CD4-positive, alpha-beta T cell (primary cell): ENCODE measurements at regions of chr7 and their contacts with region 1.

Region 1: DNA sequence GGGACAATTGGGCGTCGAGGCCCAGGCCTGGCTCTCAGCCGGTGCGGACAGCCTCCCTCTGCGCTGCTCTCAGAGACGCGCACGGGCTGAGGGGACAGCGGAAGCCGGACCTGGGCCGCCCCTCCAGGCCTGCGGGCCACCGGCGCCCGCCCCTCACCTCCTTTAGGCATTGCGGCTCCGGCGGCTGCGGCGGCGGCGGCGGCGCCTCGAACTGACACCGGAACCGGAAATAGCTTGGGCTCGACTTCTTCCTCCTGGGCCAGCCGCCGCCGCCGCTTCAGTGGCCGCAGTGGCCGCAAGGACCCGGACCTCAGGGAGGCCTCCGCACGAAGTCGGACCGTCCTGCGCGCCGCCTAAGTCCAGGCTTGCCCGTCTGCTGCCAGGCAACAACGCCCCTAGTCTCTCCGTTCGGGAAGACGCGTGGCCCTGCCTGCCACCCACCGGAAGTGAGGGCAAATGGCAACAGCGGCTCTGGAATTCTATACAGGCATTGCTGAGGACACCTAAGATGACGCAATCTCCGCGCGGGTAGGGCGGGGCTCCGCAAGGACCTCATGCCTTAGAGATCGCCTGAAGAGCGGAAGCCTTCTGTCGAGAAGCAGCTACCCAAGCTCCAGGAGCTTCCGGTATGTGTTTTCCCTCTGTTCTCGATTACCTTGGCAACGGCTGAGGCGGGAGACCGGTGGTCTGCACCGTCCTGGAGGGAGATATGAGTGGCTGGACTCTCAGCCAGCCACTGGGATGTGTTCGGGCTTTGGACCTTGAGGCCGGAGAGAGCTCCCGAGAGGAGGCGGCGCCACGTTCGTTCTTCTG is at the starts of genes BUD31 and PDAP1:
- DNase-seq: peak; percentile 90 to 98 (median 94)
- ATAC-seq: peak; percentile 86
- H3K4me3 ChIP-seq: peak within 1 kb of the TSS; percentile 99
- H3K4me3 Mint-ChIP-seq: peak within 1 kb of the TSS; percentile 93
- H3K27ac ChIP-seq: peak within 1 kb of the TSS; percentile 98 to 99
- H3K27ac Mint-ChIP-seq: peak within 1 kb of the TSS; percentile 87
- H3K4me1 ChIP-seq: peaks cover 55% of the 10 kb centered on the region
- H3K4me1 Mint-ChIP-seq: peaks cover 58% of the 10 kb centered on the region
- H3K27me3 ChIP-seq: no peaks in the 10 kb centered on the region
- H3K27me3 Mint-ChIP-seq: no peaks in the 10 kb centered on the region
- CTCF ChIP-seq: no peak
- total RNA-seq, gene BUD31: 147 to 153 TPM
- total RNA-seq, gene PDAP1: 35.0 to 38.0 TPM

Region 2: DNA sequence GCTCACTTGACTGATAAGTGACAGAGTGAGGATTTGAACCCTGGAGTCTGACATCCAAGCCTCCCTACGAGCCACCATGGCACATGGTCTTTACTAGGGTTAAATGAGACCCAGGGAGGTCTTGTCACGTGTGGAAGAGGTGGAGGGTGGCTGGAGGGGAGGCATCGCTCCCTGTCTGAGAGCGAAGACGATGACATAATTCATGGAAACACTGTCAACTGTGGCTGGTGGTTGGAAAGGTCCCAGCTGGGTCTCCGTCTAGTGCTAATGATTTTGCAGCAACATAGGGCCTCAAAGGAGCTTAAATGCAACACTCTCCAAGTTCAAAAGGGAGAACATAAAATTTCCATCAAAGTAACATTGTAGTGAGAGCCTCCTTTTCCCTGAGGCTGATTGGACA is 907.8 kb before region 1 on chr7:
- CTCF ChIA-PET with region 1: no interaction called
- POLR2A ChIA-PET with region 1: no interaction called
- intact Hi-C with region 1: no loop called
- DNase-seq: no peak
- ATAC-seq: no peak
- H3K4me3 ChIP-seq: no peak overlapping the region
- H3K4me3 Mint-ChIP-seq: no peak overlapping the region
- H3K27ac ChIP-seq: no peak overlapping the region
- H3K27ac Mint-ChIP-seq: no peak overlapping the region
- H3K4me1 ChIP-seq: no peaks in the 10 kb centered on the region
- H3K4me1 Mint-ChIP-seq: no peaks in the 10 kb centered on the region
- H3K27me3 ChIP-seq: peaks cover 0 to 2% of the 10 kb centered on the region in 2 experiments
- H3K27me3 Mint-ChIP-seq: peaks cover 8% of the 10 kb centered on the region
- CTCF ChIP-seq: no peak

Region 3: DNA sequence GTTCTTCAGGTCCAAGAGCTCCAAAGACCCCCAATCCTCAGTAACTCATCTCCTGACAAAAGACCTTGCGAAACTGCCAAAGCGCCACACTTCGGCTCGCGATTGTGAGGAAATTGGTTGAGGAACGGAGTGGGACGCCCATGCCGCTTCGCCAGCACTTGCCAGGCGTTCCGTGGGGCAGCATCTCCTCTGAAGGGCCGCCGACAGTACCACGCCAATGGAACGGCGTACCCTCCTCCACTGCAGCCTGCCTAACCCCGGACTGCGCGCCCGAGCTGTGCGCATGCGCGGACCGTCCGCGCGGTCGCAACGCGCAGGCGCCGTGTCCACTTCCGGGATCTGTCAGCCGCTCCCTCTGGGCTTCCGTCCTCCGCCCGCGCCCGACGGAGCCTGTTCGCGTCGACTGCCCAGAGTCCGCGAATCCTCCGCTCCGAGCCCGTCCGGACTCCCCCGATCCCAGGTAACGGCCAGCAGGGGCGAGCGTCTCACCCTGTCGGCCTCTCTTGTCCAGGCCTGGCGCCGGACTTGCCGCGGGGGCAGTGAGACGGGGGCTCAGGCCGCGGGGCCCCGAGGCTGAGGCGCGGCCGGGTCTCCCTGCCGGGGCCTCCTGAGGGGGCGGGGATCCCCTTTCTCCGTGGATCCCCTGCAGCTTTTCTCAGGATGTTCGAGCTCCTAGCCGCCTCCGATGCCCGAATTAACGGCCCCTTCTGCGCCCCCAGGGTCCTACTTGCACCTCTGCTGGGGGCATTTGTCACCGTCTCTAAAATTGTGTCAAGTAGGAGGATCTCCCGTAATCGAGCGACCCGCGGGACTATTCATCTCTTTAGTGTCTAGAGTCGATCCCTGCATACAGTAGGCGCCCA is 82.8 kb before region 1 on chr7 and contains the start of gene ARPC1A:
- CTCF ChIA-PET with region 1: no interaction called
- POLR2A ChIA-PET with region 1: interaction called, 10 read pairs
- intact Hi-C with region 1: loop called in 1 of 2 experiments (anchors 10 kb)
- DNase-seq: peak; percentile 83 to 97 (median 91)
- ATAC-seq: peak; percentile 94
- H3K4me3 ChIP-seq: peak within 1 kb of the TSS; percentile 90
- H3K4me3 Mint-ChIP-seq: peak within 1 kb of the TSS; percentile 94
- H3K27ac ChIP-seq: peak within 1 kb of the TSS; percentile 28 to 69
- H3K27ac Mint-ChIP-seq: peak within 1 kb of the TSS; percentile 85
- H3K4me1 ChIP-seq: peaks cover 42% of the 10 kb centered on the region
- H3K4me1 Mint-ChIP-seq: peaks cover 42% of the 10 kb centered on the region
- H3K27me3 ChIP-seq: no peaks in the 10 kb centered on the region
- H3K27me3 Mint-ChIP-seq: no peaks in the 10 kb centered on the region
- CTCF ChIP-seq: no peak
- total RNA-seq, gene ARPC1A: 25.3 to 30.4 TPM

Region 4: GRCh38 chr7:99374103-99375064 is 34.2 kb before region 1 on chr7 and contains the start of gene ARPC1B:
- CTCF ChIA-PET with region 1: interaction called, 7 read pairs
- POLR2A ChIA-PET with region 1: interaction called, 39 read pairs
- intact Hi-C with region 1: loop called in 1 of 2 experiments (anchors 1 kb)
- DNase-seq: peak; percentile 63 to 95 (median 82)
- ATAC-seq: peak; percentile 51
- H3K4me3 ChIP-seq: peak within 1 kb of the TSS; percentile 74
- H3K4me3 Mint-ChIP-seq: peak within 1 kb of the TSS; percentile 93
- H3K27ac ChIP-seq: peak within 1 kb of the TSS; percentile 89 to 94
- H3K27ac Mint-ChIP-seq: peak within 1 kb of the TSS; percentile 95
- H3K4me1 ChIP-seq: peaks cover 47% of the 10 kb centered on the region
- H3K4me1 Mint-ChIP-seq: peaks cover 27% of the 10 kb centered on the region
- H3K27me3 ChIP-seq: no peaks in the 10 kb centered on the region
- H3K27me3 Mint-ChIP-seq: no peaks in the 10 kb centered on the region
- CTCF ChIP-seq: no peak
- total RNA-seq, gene ARPC1B: 58.8 to 66.6 TPM

Region 5: DNA sequence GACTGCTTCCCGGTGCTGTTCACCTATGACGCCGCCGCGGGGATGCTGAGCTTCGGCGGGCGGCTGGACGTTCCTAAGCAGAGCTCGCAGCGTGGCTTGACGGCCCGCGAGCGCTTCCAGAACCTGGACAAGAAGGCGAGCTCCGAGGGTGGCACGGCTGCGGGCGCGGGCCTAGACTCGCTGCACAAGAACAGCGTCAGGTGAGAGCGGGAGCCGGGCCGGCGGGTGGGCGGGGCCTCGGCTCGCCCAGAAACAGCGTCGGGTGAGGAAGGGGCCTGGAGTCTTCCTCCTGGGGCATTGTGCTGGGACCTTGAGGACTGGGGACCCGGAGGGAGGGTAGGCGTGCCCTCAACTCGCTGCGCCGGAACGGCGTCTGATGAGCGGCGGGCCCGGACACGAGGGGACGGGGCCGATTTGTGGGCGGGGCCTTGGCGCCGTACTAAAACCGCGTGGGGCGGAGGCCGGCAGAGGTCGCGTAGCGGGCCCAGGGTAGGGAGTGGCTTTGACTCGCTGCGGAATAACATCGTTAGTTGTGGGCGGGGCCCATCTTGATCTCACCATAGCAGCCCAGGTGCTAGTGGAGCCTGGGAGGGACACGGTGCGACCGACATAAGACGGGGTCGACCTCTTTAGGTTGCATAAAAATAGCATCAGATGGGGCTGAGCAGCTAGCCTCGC is 15.8 kb before region 1 on chr7:
- CTCF ChIA-PET with region 1: no interaction called
- POLR2A ChIA-PET with region 1: interaction called, 105 read pairs
- intact Hi-C with region 1: loop called (anchors 1 to 2 kb)
- DNase-seq: peak; percentile 67 to 93 (median 81)
- ATAC-seq: peak; percentile 95
- H3K4me3 ChIP-seq: peak overlapping the region; percentile 56
- H3K4me3 Mint-ChIP-seq: peak overlapping the region; percentile 76
- H3K27ac ChIP-seq: peak overlapping the region; percentile 63 to 72
- H3K27ac Mint-ChIP-seq: peak overlapping the region; percentile 94
- H3K4me1 ChIP-seq: peaks cover 28% of the 10 kb centered on the region
- H3K4me1 Mint-ChIP-seq: peaks cover 18% of the 10 kb centered on the region
- H3K27me3 ChIP-seq: no peaks in the 10 kb centered on the region
- H3K27me3 Mint-ChIP-seq: no peaks in the 10 kb centered on the region
- CTCF ChIP-seq: no peak

Region 6: GRCh38 chr7:99465421-99465768 is 56.8 kb after region 1 on chr7:
- CTCF ChIA-PET with region 1: no interaction called
- POLR2A ChIA-PET with region 1: interaction called, 15 read pairs
- intact Hi-C with region 1: loop called (anchors 2 kb)
- DNase-seq: no peak
- ATAC-seq: peak; percentile 7
- H3K4me3 ChIP-seq: peak overlapping the region; percentile 92
- H3K4me3 Mint-ChIP-seq: peak overlapping the region; percentile 92
- H3K27ac ChIP-seq: peak overlapping the region; percentile 64 to 68
- H3K27ac Mint-ChIP-seq: peak overlapping the region; percentile 91
- H3K4me1 ChIP-seq: peaks cover 51% of the 10 kb centered on the region
- H3K4me1 Mint-ChIP-seq: peaks cover 35% of the 10 kb centered on the region
- H3K27me3 ChIP-seq: no peaks in the 10 kb centered on the region
- H3K27me3 Mint-ChIP-seq: no peaks in the 10 kb centered on the region
- CTCF ChIP-seq: no peak

Region 7: DNA sequence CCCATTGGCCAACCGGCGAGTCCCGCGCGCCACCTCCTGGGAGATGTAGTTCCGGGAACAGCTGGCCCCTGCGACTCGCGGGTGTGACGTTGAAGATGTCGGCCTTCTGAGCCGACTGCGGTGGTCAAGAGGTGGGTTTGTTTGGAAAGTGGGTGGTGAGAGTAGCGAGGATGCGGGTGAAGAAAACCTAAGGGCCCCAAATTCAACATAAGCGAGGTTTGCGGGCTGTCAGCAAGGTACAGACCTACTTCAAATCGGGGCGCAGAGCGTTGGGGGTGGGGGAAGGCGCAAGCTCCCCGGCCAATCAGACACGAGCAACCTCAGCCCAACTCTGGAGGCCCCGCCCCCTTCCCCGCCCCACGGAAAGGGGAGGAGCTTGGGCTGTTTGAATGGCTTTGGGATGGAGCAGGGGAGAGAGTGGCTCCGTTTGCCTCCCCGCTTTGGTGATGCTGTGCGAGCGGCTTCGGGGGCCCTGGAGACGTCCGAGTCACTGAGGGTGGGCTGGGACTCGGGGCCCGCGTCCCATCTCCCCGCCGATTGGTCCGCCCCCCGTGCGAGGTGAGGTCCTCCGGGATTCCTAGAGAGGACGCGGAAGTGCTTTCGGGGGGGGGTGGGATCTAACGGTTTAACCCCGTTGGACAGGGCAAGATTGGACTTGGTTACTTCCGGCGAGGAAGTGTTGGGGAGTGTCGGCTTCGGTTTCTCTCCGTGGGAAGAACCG is 96.2 kb after region 1 on chr7 and contains the start of gene ZKSCAN5:
- CTCF ChIA-PET with region 1: no interaction called
- POLR2A ChIA-PET with region 1: interaction called, 37 read pairs
- intact Hi-C with region 1: loop called in 1 of 2 experiments (anchors 1 kb)
- DNase-seq: peak; percentile 94 to 98 (median 97)
- ATAC-seq: peak; percentile 85
- H3K4me3 ChIP-seq: peak within 1 kb of the TSS; percentile 90
- H3K4me3 Mint-ChIP-seq: peak within 1 kb of the TSS; percentile 100
- H3K27ac ChIP-seq: peak within 1 kb of the TSS; percentile 93
- H3K27ac Mint-ChIP-seq: peak within 1 kb of the TSS; percentile 95
- H3K4me1 ChIP-seq: peaks cover 42% of the 10 kb centered on the region
- H3K4me1 Mint-ChIP-seq: peaks cover 38% of the 10 kb centered on the region
- H3K27me3 ChIP-seq: no peaks in the 10 kb centered on the region
- H3K27me3 Mint-ChIP-seq: no peaks in the 10 kb centered on the region
- CTCF ChIP-seq: peak; percentile 16
- total RNA-seq, gene ZKSCAN5: 3.8 to 4.4 TPM